GM10248 (cell line): ENCODE measurements at regions of chr10 and their contacts with region 1.

Region 1: GRCh38 chr10:101889256-101890210 is 45.9 kb upstream of the KCNIP2 start:
- DNase-seq: peak; percentile 72
- CTCF ChIP-seq: peak; percentile 82

Region 2: GRCh38 chr10:101671453-101671852 is 218.1 kb before region 1 on chr10:
- CTCF ChIA-PET with region 1: no interaction called
- POLR2A ChIA-PET with region 1: no interaction called
- DNase-seq: peak; percentile 35
- CTCF ChIP-seq: no peak

Region 3: DNA sequence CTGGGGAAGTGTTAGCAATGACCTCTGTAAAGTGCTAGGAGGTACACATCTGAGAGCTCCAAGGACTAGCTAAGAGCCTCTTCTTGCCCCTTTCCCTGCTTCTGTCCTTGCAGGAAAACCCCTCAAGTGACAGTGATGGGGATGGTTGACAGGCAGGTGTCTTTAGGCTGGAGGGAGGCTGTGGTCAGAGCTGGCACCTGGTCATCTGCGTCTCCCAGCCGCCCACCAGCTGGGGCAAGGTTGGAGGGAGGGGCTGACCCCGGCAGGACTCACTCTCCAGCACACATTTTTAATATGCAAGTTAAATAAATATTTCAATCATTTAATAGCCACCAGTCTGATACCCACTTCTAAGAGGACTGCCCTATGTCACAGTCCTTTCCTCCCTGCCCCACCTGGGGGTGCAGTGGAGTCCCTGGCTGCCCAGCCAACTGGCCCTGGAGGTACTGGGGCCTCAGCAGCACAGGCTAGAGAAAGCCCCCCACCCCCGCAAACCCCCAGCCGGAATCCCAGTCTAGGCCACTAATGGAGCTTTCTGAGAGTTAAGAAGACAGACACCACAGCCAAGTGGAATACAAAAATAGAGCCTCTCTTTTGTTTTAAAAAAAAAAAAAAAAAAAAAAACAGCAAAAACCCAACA is 119.9 kb before region 1 on chr10:
- CTCF ChIA-PET with region 1: no interaction called
- POLR2A ChIA-PET with region 1: no interaction called
- DNase-seq: no peak
- CTCF ChIP-seq: no peak

Region 4: DNA sequence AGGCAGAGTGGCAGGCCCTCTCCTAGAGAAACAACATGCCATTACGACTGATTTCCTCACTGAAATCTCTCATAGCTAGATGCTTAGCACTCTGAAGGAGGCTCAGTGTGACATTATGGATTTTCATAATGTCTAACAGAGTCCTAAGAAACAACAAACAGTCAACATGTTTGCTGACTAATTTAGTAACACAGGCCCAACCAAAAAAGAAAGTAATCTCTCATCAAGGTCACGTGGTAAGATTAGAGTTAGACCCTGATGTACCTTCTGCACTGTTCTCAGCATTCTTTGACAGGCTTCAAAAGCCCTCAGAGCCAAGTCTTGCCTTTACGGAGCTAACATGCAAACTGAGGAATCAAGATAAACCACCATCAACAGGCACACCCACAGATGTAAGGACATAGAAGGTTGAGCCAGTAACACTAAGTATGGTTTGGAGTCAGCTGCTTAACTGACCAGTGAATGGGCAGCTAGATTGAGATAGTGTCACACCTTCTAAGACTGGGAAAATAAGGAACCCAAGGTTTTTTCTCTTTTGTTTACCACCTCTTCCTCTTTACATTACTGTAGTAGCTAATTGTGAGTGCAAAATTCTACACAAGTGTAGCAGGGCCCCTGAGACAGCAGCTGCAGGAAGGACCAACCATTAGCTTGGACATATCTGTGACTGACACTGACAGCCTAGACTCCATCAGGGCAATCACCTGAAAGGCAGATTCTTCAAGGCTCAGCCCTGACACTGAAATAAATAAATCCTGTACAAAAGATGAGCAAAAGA is 30.6 kb before region 1 on chr10:
- CTCF ChIA-PET with region 1: interaction called, 40 read pairs
- POLR2A ChIA-PET with region 1: no interaction called
- DNase-seq: peak; percentile 60
- CTCF ChIP-seq: no peak

Region 5: DNA sequence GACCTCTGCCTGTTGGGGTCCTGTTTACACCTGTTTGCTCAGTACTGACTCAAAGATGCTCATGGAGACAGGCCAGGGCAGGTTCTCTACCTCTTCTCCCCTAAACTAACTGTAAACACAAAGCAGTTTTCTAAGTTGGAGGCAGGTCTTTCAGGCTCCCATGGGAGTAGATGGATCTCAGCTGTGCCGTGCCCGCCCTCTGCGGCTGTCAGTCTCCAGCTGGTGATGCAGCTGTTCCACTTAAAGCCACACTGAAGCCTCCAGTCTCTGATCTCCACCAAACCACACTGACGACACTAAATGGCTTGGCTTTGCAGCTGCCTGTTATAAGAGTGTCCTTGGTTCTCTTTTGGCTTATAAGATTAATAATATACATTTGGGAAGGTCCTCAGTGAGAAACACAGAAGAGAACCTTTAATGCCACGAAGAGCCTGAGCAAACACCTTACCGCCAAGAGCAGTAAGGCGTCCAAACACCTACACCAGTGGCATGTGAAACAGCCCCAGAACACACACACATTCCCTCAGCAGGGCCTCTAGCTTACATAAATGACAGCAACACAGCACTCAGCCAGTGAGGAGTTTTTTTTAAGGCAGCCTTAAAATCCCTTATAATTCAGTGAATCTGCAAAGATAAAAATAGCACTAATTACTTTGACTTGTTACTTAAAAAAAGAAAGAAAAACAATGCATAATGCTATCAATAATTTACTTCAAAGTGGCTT is 14.5 kb after region 1 on chr10:
- CTCF ChIA-PET with region 1: interaction called, 84 read pairs
- POLR2A ChIA-PET with region 1: no interaction called
- DNase-seq: peak; percentile 67
- CTCF ChIP-seq: no peak

Region 6: DNA sequence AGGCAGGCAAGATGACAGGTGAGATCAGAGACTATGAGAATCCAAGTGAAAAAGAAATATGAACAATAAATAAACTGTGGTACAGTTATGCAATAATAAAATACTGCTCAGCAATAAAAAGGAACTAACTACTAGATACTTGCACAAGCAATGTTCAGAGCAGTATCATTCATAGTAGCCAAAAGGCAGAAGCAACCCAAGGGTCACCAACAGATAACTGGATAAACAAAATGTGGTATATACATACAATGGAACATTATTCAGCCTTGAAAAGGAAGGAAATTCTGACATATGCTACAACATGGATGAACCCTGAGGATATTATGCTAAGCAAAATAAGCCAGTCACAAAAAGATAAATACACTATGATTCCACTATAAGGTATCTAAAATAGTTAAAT is 31.0 kb after region 1 on chr10:
- CTCF ChIA-PET with region 1: interaction called, 24 read pairs
- POLR2A ChIA-PET with region 1: no interaction called
- DNase-seq: no peak
- CTCF ChIP-seq: no peak

Region 7: DNA sequence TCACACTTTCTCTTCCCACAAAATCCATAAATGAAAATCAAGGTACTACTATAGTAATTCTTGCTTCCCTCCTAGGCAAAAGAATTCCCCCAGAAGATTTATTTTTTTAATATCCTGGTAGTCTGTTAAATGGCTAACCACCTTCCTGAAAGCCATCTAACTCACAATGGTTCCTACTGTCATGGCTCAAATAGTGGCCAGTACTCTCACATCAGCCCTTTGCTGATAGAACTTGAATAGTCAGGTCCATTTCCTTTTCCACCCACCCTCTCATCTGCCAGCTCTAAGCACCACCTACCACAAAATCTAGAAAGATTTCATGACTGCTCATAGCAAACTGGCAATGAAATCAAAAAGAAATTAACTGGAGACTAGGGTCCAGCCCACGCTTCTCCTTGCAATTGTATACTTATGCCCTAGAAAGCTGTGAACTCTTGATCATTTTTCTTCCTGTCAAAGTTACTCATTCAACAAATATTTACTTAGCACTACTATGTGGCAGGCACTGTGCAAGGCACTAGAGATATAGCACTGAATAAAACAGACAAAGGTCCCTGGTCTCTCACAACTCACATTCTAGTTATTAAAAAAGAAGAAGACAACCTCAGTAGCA is 106.0 kb after region 1 on chr10:
- CTCF ChIA-PET with region 1: interaction called, 21 read pairs
- POLR2A ChIA-PET with region 1: no interaction called
- DNase-seq: no peak
- CTCF ChIP-seq: no peak

Region 8: GRCh38 chr10:102016416-102016815 is 126.9 kb after region 1 on chr10:
- CTCF ChIA-PET with region 1: interaction called, 249 read pairs
- POLR2A ChIA-PET with region 1: no interaction called
- DNase-seq: no peak
- CTCF ChIP-seq: no peak

Region 9: DNA sequence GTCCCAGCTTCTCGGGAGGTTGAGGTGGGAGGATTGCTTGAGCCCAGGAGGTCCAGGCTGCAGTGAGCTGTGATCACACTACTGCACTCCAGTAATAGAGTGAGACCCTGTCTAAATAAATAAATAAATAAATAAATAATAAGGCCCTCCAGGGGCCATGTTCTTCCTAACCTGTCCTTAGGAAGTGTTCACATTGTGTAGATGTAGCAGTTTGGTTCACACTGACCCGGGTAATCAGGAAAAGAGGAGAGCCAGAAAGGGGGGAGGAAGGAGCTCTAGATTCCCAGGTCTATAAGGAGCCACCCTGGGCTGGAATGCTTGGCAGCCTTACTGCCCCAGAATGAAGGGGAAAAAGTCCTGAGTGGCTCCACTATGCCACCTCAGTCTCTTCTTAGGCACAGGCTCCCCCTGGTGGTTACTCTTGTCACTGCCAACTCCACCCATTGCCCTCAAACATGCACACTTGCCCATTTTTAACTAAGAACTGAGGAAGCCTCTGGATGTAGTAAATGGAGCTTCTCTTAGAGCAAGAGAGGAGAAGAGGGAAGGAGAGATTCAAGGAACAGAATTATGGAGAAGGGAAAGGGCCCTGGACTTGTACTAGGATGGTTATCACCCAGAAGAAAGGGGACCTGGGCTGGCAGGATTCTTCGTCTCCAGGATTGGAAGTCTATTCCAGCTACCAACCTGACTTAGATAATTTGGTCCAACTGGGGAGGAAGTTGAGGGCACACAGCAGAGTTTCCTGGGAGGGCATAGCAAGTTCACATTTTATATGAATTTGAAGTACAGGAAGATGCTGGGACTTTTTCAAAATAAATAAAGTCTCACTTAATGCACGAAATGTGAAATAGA is 183.4 kb after region 1 on chr10:
- CTCF ChIA-PET with region 1: interaction called, 17 read pairs
- POLR2A ChIA-PET with region 1: no interaction called
- DNase-seq: peak; percentile 83
- CTCF ChIP-seq: peak; percentile 88